Vagina (tissue), 2 donors: ENCODE measurements at regions of chr2 and their contacts with region 1.

Region 1: GRCh38 chr2:120907812-120908211 is 172.1 kb downstream of the GLI2 start:
- DNase-seq: no peak
- H3K4me3 ChIP-seq: no peak overlapping the region
- H3K27ac ChIP-seq: no peak overlapping the region
- H3K4me1 ChIP-seq: peaks cover 37% of the 10 kb centered on the region
- H3K27me3 ChIP-seq: no peaks in the 10 kb centered on the region
- CTCF ChIP-seq: no peak
- POLR2A ChIP-seq: no peak

Region 2: DNA sequence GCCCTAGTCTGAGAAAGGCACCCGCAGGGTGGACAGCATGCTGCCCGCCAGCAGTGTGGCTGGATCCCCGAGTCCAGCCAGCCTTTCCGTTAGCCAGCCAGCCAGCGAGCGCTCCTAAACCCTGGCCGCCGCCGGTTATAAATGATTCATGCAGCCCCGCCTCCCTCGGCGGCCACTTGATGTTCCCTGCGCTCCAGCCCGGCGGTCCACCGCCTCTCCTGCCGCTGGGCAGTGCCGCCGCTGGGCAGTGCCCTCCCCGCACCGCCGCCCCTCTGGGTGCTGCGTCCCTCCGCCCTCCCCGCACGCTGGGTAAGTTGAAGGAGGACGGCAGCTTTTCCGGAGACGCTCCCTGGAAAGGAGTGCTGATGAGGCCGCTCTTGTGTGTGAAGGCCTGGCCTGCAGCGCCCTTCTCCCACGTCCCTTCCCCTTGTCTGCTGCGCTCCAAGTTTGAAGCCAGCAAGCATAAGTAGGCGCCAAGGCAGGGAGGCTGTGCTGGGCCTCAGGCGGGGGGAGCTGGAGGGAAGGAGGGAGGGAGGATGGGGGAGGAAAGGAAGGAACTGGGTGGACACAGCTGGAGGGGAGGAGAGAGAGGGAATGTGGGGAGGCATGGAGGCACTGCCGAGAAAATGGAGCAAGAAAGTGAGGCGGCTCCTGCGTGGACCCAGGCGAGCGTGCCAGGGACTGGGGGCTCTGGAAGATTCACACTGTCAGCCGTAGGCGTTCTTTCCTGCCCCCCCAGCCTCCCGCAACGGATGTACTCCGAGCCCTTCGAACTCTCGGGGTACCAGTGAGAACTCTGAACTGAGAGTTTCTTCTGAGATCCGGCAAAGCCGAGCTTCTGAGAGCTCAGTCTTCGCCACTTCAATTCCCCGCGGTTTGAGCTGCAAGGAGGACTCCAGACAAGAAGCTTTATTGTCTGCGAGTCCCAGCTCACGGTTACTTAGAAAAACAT is 40.2 kb before region 1 on chr2:
- intact Hi-C with region 1: loop called (anchors 2 kb)
- DNase-seq: no peak
- H3K4me3 ChIP-seq: peak overlapping the region; percentile 38 to 49
- H3K27ac ChIP-seq: peak overlapping the region; percentile 85
- H3K4me1 ChIP-seq: peaks cover 50% of the 10 kb centered on the region
- H3K27me3 ChIP-seq: no peaks in the 10 kb centered on the region
- CTCF ChIP-seq: no peak
- POLR2A ChIP-seq: no peak

Region 3: GRCh38 chr2:121076885-121077549 is 169.2 kb after region 1 on chr2:
- intact Hi-C with region 1: no loop called
- DNase-seq: no peak
- H3K4me3 ChIP-seq: no peak overlapping the region
- H3K27ac ChIP-seq: no peak overlapping the region
- H3K4me1 ChIP-seq: peaks cover 9% of the 10 kb centered on the region
- H3K27me3 ChIP-seq: peaks cover 4% of the 10 kb centered on the region
- CTCF ChIP-seq: peak; percentile 27 to 69 (median 33)
- POLR2A ChIP-seq: no peak